ENCODE measurements at regions of chr11 and their contacts with region 1.

Region 1: GRCh38 chr11:986294-986959 is 50.1 kb downstream of the MUC6 start:
- DNase-seq: no peak
- ATAC-seq: peak in 1 of 4 donors; percentile 15
- H3K4me3 ChIP-seq: no peak overlapping the region
- H3K27ac ChIP-seq: no peak overlapping the region
- H3K4me1 ChIP-seq: peaks cover 1% of the 10 kb centered on the region
- H3K27me3 ChIP-seq: no peaks in the 10 kb centered on the region
- CTCF ChIP-seq: no peak

Region 2: DNA sequence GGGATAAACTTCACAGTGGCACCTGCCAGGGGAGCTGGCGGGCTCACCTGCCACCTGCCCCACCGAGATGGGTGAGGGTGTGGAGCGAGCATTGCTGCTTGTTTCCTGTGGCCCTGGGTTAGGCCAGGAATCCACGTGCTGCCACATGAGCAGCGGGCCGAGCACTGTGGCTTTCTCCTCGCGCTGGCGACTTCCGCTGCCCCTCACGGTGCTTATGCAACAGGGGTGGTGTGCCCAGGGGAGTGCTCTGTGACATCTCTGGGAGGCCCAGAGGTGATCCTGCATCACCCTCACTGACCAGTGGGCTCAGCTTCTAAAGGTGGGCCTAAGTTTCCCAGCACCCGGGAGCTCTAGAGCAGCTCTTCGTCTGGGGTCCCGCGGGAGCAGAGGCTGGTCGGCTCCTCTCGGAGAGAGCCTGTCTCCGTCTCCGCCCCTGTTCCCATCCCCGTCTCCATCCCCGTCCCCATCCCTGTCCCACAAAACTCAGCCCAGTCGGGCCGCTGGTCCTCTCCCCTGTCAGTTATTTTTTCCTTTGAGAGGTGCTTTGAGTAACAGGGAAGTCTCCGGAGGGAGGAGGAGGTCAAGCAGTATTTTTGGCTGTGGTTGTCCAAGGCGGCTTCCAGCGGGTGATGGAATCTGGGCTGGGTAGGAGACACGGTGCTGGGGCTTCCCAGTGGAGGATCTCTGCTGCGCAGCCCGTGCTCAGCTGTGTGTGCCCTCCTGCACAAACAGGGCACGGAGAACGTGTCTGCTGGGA is 18.3 kb before region 1 on chr11:
- intact Hi-C with region 1: loop called in 1 of 2 experiments (anchors 2 kb)
- DNase-seq: no peak
- ATAC-seq: no peak
- H3K4me3 ChIP-seq: no peak overlapping the region
- H3K27ac ChIP-seq: no peak overlapping the region
- H3K4me1 ChIP-seq: no peaks in the 10 kb centered on the region
- H3K27me3 ChIP-seq: no peaks in the 10 kb centered on the region
- CTCF ChIP-seq: no peak

Region 3: GRCh38 chr11:1087961-1088908 is 101.8 kb after region 1 on chr11:
- intact Hi-C with region 1: no loop called
- DNase-seq: peak; percentile 11 to 51
- ATAC-seq: no peak
- H3K4me3 ChIP-seq: no peak overlapping the region
- H3K27ac ChIP-seq: no peak overlapping the region
- H3K4me1 ChIP-seq: no peaks in the 10 kb centered on the region
- H3K27me3 ChIP-seq: peaks cover 0 to 4% (median 0%) of the 10 kb centered on the region in 3 donors
- CTCF ChIP-seq: no peak

Region 4: DNA sequence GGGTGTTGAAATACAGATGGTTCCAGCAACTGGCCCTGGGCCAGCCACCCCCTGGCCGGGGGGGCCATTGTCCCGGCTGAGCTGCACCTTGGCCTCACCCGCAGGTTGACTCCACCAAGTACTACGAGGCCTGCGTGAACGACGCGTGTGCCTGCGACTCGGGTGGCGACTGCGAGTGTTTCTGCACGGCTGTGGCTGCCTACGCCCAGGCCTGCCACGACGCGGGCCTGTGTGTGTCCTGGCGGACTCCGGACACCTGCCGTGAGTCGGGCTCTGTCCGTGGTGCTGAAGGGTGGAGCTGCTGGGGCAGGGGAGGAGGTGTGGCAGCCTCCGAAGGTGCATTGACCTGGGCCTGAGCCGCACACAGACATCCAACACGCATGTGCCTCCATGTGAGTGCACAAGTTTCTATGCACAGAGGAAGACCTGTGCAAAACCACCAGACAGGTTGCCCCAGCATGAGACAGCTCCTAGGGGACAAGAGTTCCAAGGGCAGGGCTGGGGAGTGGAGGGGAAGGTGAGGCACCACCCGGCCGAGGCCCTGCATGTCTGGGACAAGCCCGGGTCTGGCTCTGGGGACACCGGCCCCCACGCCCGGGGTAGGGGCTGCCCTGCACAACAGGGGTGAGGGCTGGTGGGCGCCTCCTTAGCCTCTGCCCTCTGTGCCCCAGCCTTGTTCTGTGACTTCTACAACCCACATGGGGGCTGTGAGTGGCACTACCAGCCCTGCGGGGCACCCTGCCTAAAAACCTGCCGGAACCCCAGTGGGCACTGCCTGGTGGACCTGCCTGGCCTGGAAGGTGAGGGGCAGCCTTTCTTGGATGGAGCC is 252.6 kb after region 1 on chr11:
- intact Hi-C with region 1: no loop called
- DNase-seq: no peak
- ATAC-seq: peak in 1 of 4 donors; percentile 34
- H3K4me3 ChIP-seq: no peak overlapping the region
- H3K27ac ChIP-seq: no peak overlapping the region
- H3K4me1 ChIP-seq: no peaks in the 10 kb centered on the region
- H3K27me3 ChIP-seq: peaks cover 0 to 3% (median 0%) of the 10 kb centered on the region in 3 donors
- CTCF ChIP-seq: no peak

Measured in psoas muscle (tissue), 8 donors.